PC-9 (cell line): ENCODE measurements at regions of chr1 and their contacts with region 1.

Region 1: GRCh38 chr1:21703318-21703963 is 34.3 kb upstream of the RAP1GAP start:
- DNase-seq: no peak
- H3K4me3 ChIP-seq: no peak overlapping the region
- H3K27ac ChIP-seq: 0 out of 2 replicates have a peak overlapping the region, but pooled peaks have one; percentile 4
- H3K4me1 ChIP-seq: no peaks in the 10 kb centered on the region
- H3K27me3 ChIP-seq: no peaks in the 10 kb centered on the region
- CTCF ChIP-seq: peak; percentile 62

Region 2: DNA sequence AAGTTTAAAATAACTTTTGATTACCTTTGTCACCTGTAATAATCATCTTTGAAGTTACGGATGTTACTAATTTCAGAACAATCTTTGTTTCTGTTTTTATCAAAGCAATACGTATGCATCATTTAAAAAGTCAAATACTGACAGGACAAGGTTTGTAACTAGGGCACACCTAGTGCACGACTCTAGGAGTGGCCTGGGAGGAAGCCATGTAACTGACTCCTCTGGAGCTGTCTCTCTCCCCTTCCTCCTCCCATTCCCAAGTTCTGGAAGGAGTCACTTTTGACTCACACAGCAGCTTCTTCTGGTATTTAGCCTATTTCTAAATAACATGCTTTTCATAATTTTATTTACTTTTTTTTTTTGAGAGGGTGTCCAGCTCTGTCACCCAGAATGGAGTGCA is 22.5 kb before region 1 on chr1:
- CTCF ChIA-PET with region 1: no interaction called
- POLR2A ChIA-PET with region 1: no interaction called
- intact Hi-C with region 1: no loop called
- DNase-seq: no peak
- H3K4me3 ChIP-seq: no peak overlapping the region
- H3K27ac ChIP-seq: no peak overlapping the region
- H3K4me1 ChIP-seq: peaks cover 15% of the 10 kb centered on the region
- H3K27me3 ChIP-seq: no peaks in the 10 kb centered on the region
- CTCF ChIP-seq: no peak

Region 3: GRCh38 chr1:21742578-21742977 is 39.1 kb after region 1 on chr1:
- CTCF ChIA-PET with region 1: no interaction called
- POLR2A ChIA-PET with region 1: interaction called, 3 read pairs
- intact Hi-C with region 1: loop called (anchors 5 kb)
- DNase-seq: no peak
- H3K4me3 ChIP-seq: no peak overlapping the region
- H3K27ac ChIP-seq: no peak overlapping the region
- H3K4me1 ChIP-seq: no peaks in the 10 kb centered on the region
- H3K27me3 ChIP-seq: no peaks in the 10 kb centered on the region
- CTCF ChIP-seq: no peak

Region 4: GRCh38 chr1:21814241-21814918 is 110.9 kb after region 1 on chr1:
- CTCF ChIA-PET with region 1: no interaction called
- POLR2A ChIA-PET with region 1: no interaction called
- intact Hi-C with region 1: loop called (anchors 5 kb)
- DNase-seq: no peak
- H3K4me3 ChIP-seq: no peak overlapping the region
- H3K27ac ChIP-seq: no peak overlapping the region
- H3K4me1 ChIP-seq: peaks cover 33% of the 10 kb centered on the region
- H3K27me3 ChIP-seq: no peaks in the 10 kb centered on the region
- CTCF ChIP-seq: no peak; the same call in 1 of the 2 replicates